Activated naive CD4-positive, alpha-beta T cell treated with anti-CD3 and anti-CD28 coated beads for 36 hours (primary cell): ENCODE measurements at regions of chr2 and their contacts with region 1.

Region 1: GRCh38 chr2:108607706-108608301 is 73.5 kb downstream of the LIMS1 start:
- DNase-seq: peak; percentile 68
- H3K4me3 Mint-ChIP-seq: no peak overlapping the region
- H3K27ac Mint-ChIP-seq: no peak overlapping the region
- H3K4me1 Mint-ChIP-seq: peaks cover 31% of the 10 kb centered on the region
- H3K27me3 Mint-ChIP-seq: no peaks in the 10 kb centered on the region

Region 2: DNA sequence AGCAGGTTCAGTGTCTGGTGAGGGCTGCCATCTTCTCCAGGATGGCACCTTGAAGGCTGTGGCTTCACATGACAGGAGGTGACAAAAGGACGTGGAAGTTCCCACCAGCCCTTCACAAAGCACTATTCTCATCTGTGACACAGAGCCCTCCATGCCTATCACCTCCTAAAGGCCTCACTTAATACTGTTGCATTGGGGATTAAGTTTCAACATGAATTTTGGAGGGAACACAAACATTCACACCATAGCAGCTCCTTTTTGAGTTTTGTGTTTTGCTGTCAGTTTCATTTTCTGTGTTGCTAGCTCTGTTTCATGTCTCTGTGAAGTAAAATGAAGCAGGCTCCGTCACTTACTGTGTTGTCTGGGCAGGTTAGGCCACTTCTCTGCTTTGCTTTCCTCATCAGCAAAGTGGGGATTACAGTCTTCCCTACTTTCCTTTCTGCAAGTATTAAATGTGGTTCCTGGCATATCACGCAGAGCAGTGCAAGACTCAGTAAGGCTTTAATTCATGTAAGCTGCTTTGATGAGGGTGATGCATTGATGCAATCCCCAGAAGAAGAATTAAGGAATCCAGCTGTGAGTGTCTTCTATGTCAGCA is 41.9 kb before region 1 on chr2:
- CTCF ChIA-PET with region 1: no interaction called
- intact Hi-C with region 1: no loop called
- DNase-seq: peak; percentile 52
- H3K4me3 Mint-ChIP-seq: peak overlapping the region; percentile 5
- H3K27ac Mint-ChIP-seq: peak overlapping the region; percentile 15
- H3K4me1 Mint-ChIP-seq: peaks cover 8% of the 10 kb centered on the region
- H3K27me3 Mint-ChIP-seq: no peaks in the 10 kb centered on the region

Region 3: DNA sequence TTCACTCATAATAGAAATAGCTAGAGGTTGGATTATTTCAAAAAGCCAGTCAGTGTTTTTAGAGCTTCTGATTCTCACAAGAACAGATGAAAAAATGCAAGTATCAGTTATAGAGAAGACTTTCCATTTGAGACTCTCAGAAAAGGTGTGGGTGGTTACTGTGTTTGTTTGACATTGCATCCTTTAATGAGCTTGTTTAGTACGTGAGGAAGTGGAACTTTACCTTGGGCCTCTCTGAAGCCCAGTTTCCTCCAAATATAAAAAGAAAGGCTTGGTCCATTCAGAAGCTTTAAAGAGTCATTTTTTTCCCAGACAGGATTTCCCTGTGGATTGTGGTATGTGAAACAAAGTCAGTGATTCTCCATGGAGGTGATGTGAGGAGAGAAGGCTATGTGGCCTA is 21.6 kb after region 1 on chr2:
- CTCF ChIA-PET with region 1: interaction called, 147 read pairs
- intact Hi-C with region 1: loop called (anchors 2 kb)
- DNase-seq: no peak
- H3K4me3 Mint-ChIP-seq: no peak overlapping the region
- H3K27ac Mint-ChIP-seq: peak overlapping the region; percentile 81
- H3K4me1 Mint-ChIP-seq: peaks cover 72% of the 10 kb centered on the region
- H3K27me3 Mint-ChIP-seq: no peaks in the 10 kb centered on the region